ENCODE measurements at regions of chr19 and their contacts with region 1.

Region 1: DNA sequence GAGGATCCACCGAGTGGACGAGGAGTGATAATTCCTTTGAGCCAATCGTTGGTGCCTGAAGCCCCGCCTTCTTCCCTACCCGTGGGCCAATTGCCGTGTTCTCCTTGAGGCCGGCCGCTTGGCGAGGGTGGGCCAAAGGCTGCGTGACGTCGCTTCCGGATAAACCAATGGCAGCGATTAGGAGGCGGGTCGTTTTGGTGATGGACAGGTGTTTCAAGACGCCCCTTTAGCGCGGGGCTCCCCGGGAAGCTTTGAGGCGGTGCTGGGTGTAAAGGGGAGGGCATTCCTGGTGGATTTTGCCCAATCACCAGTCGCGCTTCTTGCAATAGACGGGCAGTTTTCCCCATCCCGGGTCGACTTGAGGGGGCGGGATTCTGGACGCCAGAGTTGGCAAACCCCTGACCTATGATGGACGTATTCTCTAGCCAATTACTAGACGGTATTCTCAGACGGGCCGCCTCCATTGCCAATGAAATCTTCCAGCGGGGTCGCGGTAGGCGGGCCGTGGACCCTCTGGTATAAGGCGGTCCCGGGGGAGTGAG is 310 bp upstream of the PRMT1 start:
- DNase-seq: peak; percentile 100
- ATAC-seq: peak; percentile 85

Region 2: DNA sequence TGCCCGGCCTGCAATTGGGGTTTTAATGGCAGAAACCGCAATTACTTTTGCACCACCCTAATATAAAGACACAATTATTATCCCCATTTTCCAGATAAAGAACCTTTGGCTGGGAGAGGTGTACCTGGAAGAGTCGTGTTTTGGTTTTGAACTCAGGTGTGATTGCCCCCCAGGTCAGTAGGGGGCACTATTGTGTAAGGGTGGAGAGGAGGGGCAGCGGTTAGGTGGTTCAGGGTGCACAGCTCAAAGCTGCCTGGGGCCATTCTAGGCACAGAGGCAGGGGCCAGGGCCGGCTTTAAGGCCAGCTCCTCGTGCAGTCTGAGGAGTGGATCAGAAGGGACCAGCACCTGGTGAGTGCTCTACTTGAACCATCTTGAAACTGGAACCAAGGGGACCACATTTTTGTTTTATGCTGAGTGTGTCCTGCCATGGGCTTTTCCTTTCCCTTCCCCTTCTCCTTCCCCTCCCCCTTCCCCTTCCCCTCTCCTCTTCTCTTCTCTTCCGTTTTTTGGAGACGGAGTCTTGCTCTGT is 170.1 kb before region 1 on chr19:
- intact Hi-C with region 1: loop called (anchors 5 kb)
- DNase-seq: peak; percentile 66
- ATAC-seq: peak; percentile 66

Region 3: GRCh38 chr19:49690656-49691242 is 14.0 kb after region 1 on chr19 and contains the start of gene CPT1C:
- intact Hi-C with region 1: no loop called
- DNase-seq: peak; percentile 85
- ATAC-seq: peak; percentile 85
- total RNA-seq, gene CPT1C: 2.2 TPM

Region 4: DNA sequence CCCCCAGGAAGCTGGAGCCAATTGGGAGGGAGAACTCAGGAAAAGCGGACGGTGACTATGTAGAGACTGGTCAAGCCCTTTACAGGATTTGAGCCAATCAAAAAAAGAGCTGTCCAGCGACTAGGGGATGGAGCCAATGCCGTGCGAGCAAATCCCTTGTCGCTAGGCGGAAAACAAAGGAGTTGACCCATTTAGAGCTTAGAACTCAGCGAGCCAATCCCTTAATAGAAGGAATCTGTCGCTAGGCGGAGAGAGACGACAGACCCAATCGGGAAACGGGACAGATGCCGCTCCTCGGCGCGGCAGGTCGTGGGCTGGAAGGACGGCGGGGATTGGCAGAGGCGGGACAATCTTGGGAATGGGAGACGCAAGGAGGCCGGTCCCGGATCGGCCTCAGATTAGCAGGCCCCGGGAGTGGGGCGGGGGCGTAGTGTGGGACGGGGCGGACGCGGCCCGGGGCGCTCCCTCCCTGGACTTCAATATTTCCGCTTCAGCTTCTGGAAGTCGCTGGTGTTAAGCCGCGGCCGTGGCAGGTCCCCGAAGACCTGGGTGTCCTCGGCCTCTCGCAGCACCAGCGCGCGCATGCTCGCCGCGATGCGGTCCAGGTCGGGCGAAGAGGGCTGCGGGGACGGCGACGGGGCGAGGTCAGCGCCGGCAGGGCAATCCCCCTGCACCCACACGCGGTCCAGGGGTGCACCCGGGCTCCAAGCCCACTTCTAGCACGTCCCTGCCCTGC is 192.8 kb after region 1 on chr19:
- intact Hi-C with region 1: loop called (anchors 10 kb)
- DNase-seq: peak; percentile 97
- ATAC-seq: peak; percentile 77

Measured in Right ventricle myocardium superior (tissue), 1 donor.